ENCODE measurements at regions of chr16 and their contacts with region 1.

Region 1: DNA sequence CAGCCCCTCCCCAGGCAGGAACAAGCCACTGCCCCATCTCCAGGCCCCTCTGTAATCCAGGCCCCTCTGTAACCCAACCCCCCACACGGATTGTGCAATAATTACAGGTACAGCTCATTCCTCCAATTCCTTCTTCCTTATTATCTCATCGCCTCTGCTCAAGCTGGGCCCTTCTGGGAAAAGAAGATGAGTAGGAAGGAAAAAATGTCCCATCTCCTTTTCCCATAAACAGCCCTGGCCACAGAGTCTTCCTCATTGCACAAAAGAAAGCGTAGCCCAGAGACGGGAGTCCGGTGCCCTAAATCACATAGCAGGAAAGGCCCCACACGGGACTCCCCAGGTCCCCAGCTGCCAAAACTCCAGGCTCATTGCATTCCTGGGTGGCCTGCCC is 3.6 kb upstream of the LITAFD start:
- DNase-seq: no peak
- ATAC-seq: no peak
- H3K4me3 Mint-ChIP-seq: no peak overlapping the region
- H3K27ac Mint-ChIP-seq: no peak overlapping the region
- H3K4me1 Mint-ChIP-seq: peaks cover 16% of the 10 kb centered on the region
- H3K27me3 Mint-ChIP-seq: no peaks in the 10 kb centered on the region
- CTCF ChIP-seq: no peak

Region 2: GRCh38 chr16:8567750-8568617 is 310.5 kb before region 1 on chr16:
- CTCF ChIA-PET with region 1: interaction called, 25 read pairs
- POLR2A ChIA-PET with region 1: no interaction called
- intact Hi-C with region 1: loop called (anchors 5 kb)
- DNase-seq: peak; percentile 85
- ATAC-seq: peak; percentile 90
- H3K4me3 Mint-ChIP-seq: no peak overlapping the region
- H3K27ac Mint-ChIP-seq: no peak overlapping the region
- H3K4me1 Mint-ChIP-seq: peaks cover 2% of the 10 kb centered on the region
- H3K27me3 Mint-ChIP-seq: peaks cover 7% of the 10 kb centered on the region
- CTCF ChIP-seq: peak; percentile 96

Region 3: DNA sequence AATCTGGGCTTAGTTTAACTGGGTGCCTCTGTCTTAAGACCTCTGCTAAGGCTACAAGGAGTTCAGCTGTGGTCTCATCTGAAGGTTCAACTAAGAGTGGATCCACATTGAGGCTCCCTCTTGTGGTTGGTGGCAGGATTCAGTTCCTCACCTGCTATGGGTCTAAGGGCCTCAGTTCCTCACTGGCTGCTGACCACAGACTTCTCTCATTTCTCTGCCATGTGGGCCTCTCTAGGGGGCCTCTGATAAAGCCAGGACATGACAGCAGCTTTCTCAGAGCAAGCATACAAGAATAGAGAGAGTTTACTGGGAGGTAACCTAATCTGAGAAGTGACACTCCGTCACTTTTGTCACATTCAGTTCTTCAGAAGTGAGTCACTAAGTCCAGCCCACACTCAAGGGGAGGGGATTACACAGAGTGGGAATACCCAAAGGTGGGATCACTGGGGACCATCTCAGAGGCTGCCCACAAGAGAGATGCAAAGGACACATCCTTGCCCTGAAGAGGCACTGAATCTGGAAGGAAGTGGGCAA is 223.3 kb before region 1 on chr16:
- CTCF ChIA-PET with region 1: interaction called, 21 read pairs
- POLR2A ChIA-PET with region 1: no interaction called
- intact Hi-C with region 1: loop called (anchors 5 kb)
- DNase-seq: peak; percentile 65
- ATAC-seq: peak; percentile 87
- H3K4me3 Mint-ChIP-seq: no peak overlapping the region
- H3K27ac Mint-ChIP-seq: no peak overlapping the region
- H3K4me1 Mint-ChIP-seq: peaks cover 13% of the 10 kb centered on the region
- H3K27me3 Mint-ChIP-seq: no peaks in the 10 kb centered on the region
- CTCF ChIP-seq: peak; percentile 33

Region 4: DNA sequence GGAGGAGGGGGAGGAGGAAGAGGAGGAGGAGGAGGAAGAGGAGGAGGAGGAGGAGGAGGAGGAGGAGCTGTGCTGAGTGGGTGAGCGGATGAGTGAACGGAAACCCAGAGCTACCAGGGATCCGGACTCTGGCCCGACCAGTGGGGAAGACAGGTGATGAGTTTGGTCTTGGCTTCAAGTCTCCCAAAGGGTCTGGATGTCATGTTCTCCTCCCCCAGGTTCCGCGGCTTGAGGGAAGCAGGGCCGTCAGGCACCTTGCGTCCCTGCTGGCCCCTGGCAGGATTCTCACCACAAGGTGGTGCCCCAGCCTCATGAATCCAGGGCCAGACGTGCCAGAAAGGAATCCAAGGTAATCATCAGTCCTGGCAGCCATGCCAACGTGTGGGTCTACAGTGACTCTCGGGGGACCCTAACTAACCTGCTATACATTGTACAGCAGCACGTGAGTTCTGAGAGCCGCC is 217.6 kb before region 1 on chr16:
- CTCF ChIA-PET with region 1: interaction called, 21 read pairs
- POLR2A ChIA-PET with region 1: no interaction called
- intact Hi-C with region 1: loop called (anchors 5 kb)
- DNase-seq: peak; percentile 80
- ATAC-seq: peak; percentile 82
- H3K4me3 Mint-ChIP-seq: no peak overlapping the region
- H3K27ac Mint-ChIP-seq: no peak overlapping the region
- H3K4me1 Mint-ChIP-seq: peaks cover 3% of the 10 kb centered on the region
- H3K27me3 Mint-ChIP-seq: no peaks in the 10 kb centered on the region
- CTCF ChIP-seq: peak; percentile 57

Region 5: DNA sequence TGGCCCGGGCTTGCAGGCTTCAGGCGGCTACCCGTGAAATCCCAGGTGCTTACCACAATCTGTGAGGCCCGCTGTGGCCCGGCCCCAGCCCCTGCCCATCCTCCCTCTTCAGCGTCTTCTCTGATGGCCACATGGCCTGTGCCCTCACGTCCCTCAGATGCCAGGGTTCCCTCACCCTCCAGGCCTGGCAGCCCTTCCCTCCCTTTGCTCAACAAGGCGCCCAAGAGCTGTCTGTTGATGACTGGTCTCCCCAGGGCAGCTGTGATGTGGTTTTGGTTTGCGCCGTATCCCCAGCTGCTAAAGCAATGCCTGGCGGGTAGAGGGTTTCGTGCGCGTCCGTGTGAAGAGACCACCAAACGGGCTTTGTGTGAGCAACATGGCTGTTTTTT is 45.8 kb before region 1 on chr16:
- CTCF ChIA-PET with region 1: interaction called, 11 read pairs
- POLR2A ChIA-PET with region 1: no interaction called
- intact Hi-C with region 1: no loop called
- DNase-seq: no peak
- ATAC-seq: no peak
- H3K4me3 Mint-ChIP-seq: no peak overlapping the region
- H3K27ac Mint-ChIP-seq: no peak overlapping the region
- H3K4me1 Mint-ChIP-seq: peaks cover 7% of the 10 kb centered on the region
- H3K27me3 Mint-ChIP-seq: no peaks in the 10 kb centered on the region
- CTCF ChIP-seq: no peak

Region 6: DNA sequence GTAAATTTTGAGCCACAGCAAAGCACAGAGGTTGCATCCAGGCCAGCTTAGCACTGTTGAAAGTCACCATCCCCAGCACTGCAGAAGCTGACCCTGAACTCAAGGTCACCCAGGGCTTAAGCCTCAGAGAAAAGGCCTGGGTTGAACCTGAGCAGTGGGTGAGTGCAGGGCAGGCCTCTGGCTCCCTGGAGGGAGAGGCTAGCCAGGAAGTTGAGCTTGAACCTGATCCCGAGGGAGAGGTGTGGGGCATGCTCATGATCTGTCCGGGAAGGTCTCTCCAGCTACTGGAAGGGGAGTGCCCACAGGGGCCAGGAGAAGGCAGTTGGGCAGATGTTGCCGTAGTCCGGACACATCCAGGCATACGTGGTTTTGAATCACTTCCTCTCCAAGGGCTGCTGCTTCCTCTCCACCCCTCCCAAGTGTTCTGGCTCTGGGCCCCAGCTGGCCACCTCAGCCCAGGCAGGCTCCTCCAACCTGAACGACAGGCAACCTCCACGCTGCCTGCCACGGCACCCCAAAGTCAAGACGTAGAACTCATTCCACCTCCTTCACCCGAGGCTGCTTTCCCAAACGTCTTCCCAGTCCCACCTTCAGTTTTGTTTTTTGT is 28.1 kb before region 1 on chr16:
- CTCF ChIA-PET with region 1: interaction called, 13 read pairs
- POLR2A ChIA-PET with region 1: interaction called, 3 read pairs
- intact Hi-C with region 1: no loop called
- DNase-seq: no peak
- ATAC-seq: peak; percentile 15
- H3K4me3 Mint-ChIP-seq: no peak overlapping the region
- H3K27ac Mint-ChIP-seq: peak overlapping the region; percentile 87
- H3K4me1 Mint-ChIP-seq: peaks cover 24% of the 10 kb centered on the region
- H3K27me3 Mint-ChIP-seq: no peaks in the 10 kb centered on the region
- CTCF ChIP-seq: no peak

Region 7: DNA sequence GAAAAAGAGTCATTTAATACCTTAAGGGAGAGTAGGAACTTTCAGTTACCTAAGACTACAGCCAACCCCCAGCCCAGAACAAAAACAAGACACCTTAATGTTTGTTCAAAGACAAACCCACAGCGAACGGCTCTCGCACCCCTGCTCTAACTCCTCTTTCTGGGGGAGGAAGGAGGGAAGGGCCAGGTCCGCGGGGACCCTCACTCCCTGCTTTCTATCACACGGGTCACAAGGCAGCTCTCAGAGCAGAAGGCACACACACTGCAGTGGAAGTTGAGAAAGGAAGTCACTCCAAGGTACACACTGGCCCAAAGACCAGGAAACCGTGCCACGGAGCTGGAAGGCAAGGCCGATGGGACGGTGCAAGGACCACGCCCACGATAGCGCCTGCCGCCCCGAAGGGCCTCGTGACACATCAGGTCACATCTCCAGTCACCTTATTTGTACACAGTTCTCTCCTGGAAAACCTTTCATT is 13.6 kb after region 1 on chr16:
- CTCF ChIA-PET with region 1: interaction called, 39 read pairs
- POLR2A ChIA-PET with region 1: interaction called, 3 read pairs
- intact Hi-C with region 1: no loop called
- DNase-seq: no peak
- ATAC-seq: peak; percentile 24
- H3K4me3 Mint-ChIP-seq: no peak overlapping the region
- H3K27ac Mint-ChIP-seq: peak overlapping the region; percentile 82
- H3K4me1 Mint-ChIP-seq: peaks cover 3% of the 10 kb centered on the region
- H3K27me3 Mint-ChIP-seq: no peaks in the 10 kb centered on the region
- CTCF ChIP-seq: no peak